ENCODE measurements at regions of chr20 and their contacts with region 1.

Region 1: DNA sequence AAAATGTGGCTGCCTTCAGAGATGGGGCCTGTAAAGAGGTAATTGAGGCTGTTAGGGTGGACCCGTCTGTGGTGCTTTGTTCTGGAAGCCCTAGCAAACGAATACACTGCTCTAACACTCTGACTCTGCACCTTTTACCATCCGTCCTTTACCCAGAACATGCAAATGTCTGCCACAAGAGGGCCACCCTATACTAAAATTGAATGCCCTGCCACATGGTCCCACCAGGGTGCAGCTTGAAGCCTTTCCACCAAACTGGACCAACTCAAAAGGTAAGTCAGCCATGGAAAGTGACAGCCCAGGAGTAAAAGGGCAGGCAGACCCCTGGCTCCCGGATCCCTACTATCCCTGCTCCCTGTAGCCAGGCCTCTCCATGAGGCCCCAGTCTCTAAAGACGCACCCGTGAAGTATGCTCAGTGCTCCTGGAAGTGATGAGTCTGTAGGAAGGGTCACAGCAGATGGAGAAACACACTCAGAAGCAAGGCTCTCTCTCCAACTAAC is 5.8 kb upstream of the BFSP1 start:
- DNase-seq: peak; percentile 61 to 74
- H3K4me3 ChIP-seq: no peak overlapping the region
- H3K27ac ChIP-seq: no peak overlapping the region
- H3K4me1 ChIP-seq: peaks cover 38% of the 10 kb centered on the region
- H3K27me3 ChIP-seq: no peaks in the 10 kb centered on the region
- CTCF ChIP-seq: peak; percentile 93

Region 2: GRCh38 chr20:17558154-17558940 is 21.4 kb after region 1 on chr20:
- CTCF ChIA-PET with region 1: interaction called, 4 read pairs
- POLR2A ChIA-PET with region 1: interaction called, 4 read pairs
- intact Hi-C with region 1: loop called (anchors 1 kb)
- DNase-seq: peak; percentile 74 to 90
- H3K4me3 ChIP-seq: peak overlapping the region; percentile 51
- H3K27ac ChIP-seq: peak overlapping the region; percentile 92
- H3K4me1 ChIP-seq: peaks cover 82% of the 10 kb centered on the region
- H3K27me3 ChIP-seq: no peaks in the 10 kb centered on the region
- CTCF ChIP-seq: no peak

Region 3: DNA sequence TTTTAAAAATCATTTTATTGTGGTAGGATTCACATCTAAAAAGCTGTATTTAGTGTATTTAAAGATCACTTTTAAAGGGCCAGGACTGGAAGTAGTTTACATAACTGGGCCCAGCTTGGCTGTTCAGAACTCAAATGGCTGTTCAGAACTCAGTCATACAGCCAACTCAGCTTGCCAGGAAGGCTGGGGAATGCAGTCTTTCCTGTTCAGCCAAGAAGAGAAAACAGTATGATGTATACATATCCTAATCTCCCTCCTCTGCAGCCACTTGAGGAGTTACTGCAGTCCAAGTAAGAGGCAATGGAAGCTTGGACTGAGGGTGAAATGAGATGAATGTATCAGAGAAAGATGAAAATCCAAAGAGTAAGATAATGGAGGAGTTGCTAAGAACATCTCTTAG is 57.4 kb after region 1 on chr20:
- CTCF ChIA-PET with region 1: interaction called, 4 read pairs
- POLR2A ChIA-PET with region 1: no interaction called
- intact Hi-C with region 1: loop called (anchors 1 kb)
- DNase-seq: peak; percentile 69 to 88
- H3K4me3 ChIP-seq: 0 out of 2 replicates have a peak overlapping the region, but pooled peaks have one; percentile 15
- H3K27ac ChIP-seq: peak overlapping the region; percentile 39
- H3K4me1 ChIP-seq: peaks cover 35% of the 10 kb centered on the region
- H3K27me3 ChIP-seq: no peaks in the 10 kb centered on the region
- CTCF ChIP-seq: no peak

Region 4: GRCh38 chr20:17617551-17618223 is 80.7 kb after region 1 on chr20:
- CTCF ChIA-PET with region 1: interaction called, 7 read pairs
- POLR2A ChIA-PET with region 1: no interaction called
- intact Hi-C with region 1: loop called (anchors 1 kb)
- DNase-seq: peak in 1 of 2 experiments; percentile 55
- H3K4me3 ChIP-seq: no peak overlapping the region
- H3K27ac ChIP-seq: no peak overlapping the region
- H3K4me1 ChIP-seq: no peaks in the 10 kb centered on the region
- H3K27me3 ChIP-seq: no peaks in the 10 kb centered on the region
- CTCF ChIP-seq: peak; percentile 82

Region 5: DNA sequence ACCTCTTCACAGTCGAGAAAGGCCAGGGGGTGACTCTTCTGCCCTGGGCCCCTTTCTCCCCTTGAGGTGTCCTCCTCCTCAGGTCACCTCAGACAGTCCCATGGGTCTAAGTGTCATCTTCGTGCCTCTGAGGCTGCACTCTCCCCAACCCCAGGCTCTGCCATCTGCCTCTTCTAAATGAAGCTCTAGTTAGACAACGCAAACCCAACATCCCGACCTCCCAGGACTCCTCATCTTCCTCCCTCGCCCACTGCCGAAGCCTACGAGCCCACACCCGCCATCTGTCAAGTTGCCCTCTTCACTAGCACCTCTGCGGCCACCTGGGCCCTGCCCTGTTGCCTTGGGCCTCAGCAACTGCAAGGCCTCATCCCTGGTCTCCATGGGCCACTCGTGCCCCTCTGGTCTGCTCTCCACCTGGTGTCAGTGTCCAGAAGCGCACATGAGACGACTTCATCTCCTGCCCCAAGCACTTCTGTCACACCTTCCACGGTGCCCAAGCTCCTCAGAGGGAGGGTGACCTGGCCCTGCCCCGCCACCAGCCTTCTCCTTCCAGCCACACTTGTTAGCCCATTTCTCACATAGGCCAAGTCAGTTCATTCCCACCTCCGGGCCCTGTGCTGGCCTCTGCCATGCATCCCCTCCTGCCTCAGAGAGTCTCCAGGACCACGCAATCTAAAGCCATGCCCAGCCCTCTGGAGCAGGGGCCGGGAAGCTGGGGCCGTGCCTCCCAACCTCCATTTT is 91.3 kb after region 1 on chr20:
- CTCF ChIA-PET with region 1: no interaction called
- POLR2A ChIA-PET with region 1: no interaction called
- intact Hi-C with region 1: no loop called
- DNase-seq: no peak
- H3K4me3 ChIP-seq: no peak overlapping the region
- H3K27ac ChIP-seq: no peak overlapping the region
- H3K4me1 ChIP-seq: no peaks in the 10 kb centered on the region
- H3K27me3 ChIP-seq: no peaks in the 10 kb centered on the region
- CTCF ChIP-seq: no peak

Region 6: DNA sequence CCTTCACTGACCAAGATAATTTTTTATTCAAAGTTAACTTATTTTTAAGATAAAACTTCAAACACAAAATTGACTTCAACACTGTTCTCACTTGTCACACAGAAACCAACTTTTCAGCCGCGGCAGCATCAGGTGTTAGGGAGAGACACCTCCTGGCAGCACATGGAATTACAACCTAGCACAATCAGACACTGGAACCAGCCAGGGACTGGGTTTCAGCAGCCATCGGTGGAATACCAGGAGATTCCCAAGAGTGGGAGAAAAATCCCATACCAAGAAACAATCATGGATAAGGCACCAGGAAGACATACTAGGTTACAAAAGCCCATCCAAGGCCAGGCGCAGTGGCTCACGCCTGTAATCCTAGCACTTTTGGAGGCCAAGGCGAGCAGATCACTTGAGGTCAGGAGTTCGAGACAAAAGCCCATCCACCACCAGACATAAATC is 361.6 kb after region 1 on chr20:
- CTCF ChIA-PET with region 1: no interaction called
- POLR2A ChIA-PET with region 1: no interaction called
- intact Hi-C with region 1: loop called (anchors 1 kb)
- DNase-seq: peak; percentile 33 to 65
- H3K4me3 ChIP-seq: no peak overlapping the region
- H3K27ac ChIP-seq: no peak overlapping the region
- H3K4me1 ChIP-seq: no peaks in the 10 kb centered on the region
- H3K27me3 ChIP-seq: no peaks in the 10 kb centered on the region
- CTCF ChIP-seq: peak; percentile 96

Measured in PC-9 (cell line).